CD14-positive monocyte (primary cell): ENCODE measurements at regions of chr13 and their contacts with region 1.

Region 1: DNA sequence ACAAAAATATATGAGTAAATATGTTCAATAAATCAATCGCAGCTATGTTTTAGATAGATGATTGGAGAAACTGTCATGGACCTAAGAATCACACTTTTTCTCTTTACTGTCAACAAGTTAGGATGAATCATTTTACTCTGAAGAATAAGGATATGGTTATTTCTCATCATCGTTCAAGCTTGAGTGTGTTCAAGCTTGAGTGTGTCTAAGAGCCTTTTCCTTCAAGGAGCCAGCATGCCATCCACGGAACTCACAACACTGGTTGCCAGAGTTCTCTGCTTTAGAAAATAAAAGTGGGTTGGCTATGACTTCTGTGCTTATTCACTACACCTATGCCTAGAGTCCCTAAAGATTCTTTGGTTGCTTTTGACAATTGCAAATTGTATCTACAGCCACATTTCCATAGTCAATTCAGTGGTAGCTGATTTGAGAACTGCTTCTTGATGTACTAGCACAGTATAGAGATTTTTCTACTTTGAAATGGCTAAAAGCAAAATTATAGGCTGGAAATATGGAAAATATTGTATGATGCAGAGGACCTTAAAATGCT is 58.1 kb upstream of the SCEL start:
- DNase-seq: no peak
- H3K4me3 ChIP-seq: no peak overlapping the region
- H3K4me3 Mint-ChIP-seq: no peak overlapping the region
- H3K27ac ChIP-seq: peak overlapping the region in 1 of 2 donors; percentile 96
- H3K27ac Mint-ChIP-seq: peak overlapping the region in 1 of 7 donors; percentile 88
- H3K4me1 ChIP-seq: peaks cover 5 to 7% of the 10 kb centered on the region in 2 donors
- H3K4me1 Mint-ChIP-seq: peaks cover 15% of the 10 kb centered on the region
- H3K27me3 ChIP-seq: no peaks in the 10 kb centered on the region
- H3K27me3 Mint-ChIP-seq: no peaks in the 10 kb centered on the region
- CTCF ChIP-seq: no peak

Region 2: DNA sequence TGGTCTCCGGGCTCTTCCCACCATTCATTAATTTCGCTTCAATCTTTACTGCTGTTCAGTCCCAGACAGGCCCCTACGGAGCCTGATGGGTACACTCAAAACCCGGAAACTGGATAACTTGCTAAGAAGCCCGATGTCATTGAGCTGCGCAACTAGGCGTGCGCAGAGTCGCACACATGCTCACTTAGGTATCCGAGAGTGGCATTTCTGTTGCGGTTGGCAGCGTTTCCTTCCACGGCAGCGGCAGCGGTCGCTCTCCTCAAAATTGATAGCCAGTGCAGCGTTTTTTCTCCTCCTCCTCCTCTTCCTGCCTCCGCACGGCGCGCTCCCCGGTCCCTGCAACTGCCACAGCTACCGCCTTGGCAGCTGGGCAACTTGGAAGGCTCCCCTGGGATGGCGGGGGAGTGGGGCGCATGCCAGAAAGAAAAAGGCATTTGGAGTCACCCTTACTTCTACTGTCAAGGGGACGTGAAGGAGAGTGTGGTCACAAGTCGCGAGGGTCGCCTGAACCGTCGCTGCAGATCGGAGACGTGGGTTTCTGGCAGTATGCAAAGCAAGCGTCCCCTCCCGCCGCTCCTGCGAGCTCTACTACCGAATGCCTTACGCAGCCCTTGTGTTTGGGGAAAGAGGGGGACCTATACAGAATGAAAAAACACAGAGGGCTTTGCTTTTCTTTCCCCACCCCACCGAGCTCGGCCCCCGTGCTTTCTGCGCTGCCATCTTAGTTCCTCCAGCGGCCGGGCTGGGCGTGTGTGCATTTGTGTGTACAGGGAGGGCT is 148.1 kb before region 1 on chr13:
- intact Hi-C with region 1: loop called in 1 of 2 experiments (anchors 10 kb)
- DNase-seq: peak; percentile 86 to 88 (median 87)
- H3K4me3 ChIP-seq: peak overlapping the region; percentile 78 to 98 (median 88)
- H3K4me3 Mint-ChIP-seq: peak overlapping the region; percentile 97 to 98
- H3K27ac ChIP-seq: peak overlapping the region; percentile 82 to 91
- H3K27ac Mint-ChIP-seq: peak overlapping the region; percentile 91 to 96 (median 94)
- H3K4me1 ChIP-seq: peaks cover 36 to 55% of the 10 kb centered on the region in 2 donors
- H3K4me1 Mint-ChIP-seq: peaks cover 45% of the 10 kb centered on the region
- H3K27me3 ChIP-seq: no peaks in the 10 kb centered on the region
- H3K27me3 Mint-ChIP-seq: no peaks in the 10 kb centered on the region
- CTCF ChIP-seq: no peak